Colonic mucosa (tissue), 4 donors: ENCODE measurements at regions of chr16 and their contacts with region 1.

Region 1: DNA sequence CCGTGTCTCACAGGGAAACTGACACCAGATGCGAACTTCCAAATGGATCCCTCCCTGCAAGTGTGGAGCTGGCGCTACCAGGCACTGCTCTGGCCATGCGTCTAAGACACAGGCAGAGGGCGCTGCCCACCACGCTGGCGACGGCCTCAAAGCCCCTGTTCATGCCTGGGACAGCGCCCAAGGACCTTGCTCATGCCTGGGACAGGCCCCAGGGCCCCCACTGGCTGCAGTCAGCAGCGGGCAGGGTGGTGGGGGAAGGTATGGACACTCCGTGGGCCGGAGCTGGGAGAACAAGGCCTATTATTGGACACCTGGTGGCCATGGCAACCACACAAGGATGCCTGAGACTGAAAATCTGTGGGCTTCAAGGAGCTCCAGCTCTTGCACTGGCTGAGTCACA is 8.8 kb downstream of the ZG16B start:
- DNase-seq: peak; percentile 65
- H3K4me3 ChIP-seq: no peak overlapping the region
- H3K27ac ChIP-seq: no peak overlapping the region
- H3K4me1 ChIP-seq: no peaks in the 10 kb centered on the region
- H3K27me3 ChIP-seq: no peaks in the 10 kb centered on the region
- CTCF ChIP-seq: peak; percentile 58

Region 2: DNA sequence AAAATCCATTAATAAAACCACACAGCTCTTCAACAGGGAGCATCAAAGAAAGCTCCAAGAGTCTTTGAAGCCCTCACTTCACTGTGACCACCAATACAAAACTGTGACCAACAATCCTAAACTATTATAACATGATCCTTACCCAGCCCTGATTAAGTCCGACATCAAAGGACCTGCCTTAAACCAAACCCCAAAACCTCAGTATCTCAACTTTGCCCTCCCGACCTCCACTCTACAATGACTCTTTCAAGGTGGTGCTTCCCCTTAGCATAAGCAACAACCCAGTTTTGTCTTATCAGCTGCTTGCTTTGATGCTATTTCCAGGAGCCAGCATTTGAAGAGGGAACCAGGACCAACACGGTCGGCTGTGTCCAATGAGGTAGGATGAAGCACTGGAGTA is 27.5 kb after region 1 on chr16:
- intact Hi-C with region 1: loop called (anchors 1 kb)
- DNase-seq: no peak
- H3K4me3 ChIP-seq: no peak overlapping the region
- H3K27ac ChIP-seq: no peak overlapping the region
- H3K4me1 ChIP-seq: no peaks in the 10 kb centered on the region
- H3K27me3 ChIP-seq: no peaks in the 10 kb centered on the region
- CTCF ChIP-seq: no peak